Heart left ventricle (tissue), 16 donors: ENCODE measurements at regions of chr13 and their contacts with region 1.

Region 1: DNA sequence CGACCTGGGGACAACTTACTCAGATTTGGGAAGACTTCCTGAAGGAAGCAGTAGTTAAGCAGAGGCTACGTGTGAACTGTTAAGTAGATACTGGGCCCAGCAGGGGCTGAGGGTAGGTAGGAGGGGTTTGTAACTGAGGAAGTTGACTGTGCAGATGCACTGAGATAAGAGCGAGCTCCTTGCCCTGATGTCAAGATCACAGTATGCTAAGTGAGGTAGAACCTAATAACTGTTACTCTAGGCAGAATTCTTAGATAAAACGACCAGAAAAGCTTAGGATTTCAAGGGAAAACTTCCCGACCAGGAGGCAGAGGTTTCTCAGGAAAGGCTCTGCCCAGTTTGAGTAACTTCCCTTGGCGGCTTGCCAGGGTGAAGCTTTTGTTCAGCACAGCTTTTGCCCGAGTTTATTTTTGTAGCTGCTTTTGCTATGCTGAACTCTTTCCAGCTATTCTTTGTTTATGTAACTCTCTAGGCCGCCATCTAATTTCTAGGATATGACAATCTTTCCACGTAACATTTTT is 632.1 kb downstream of the DIAPH3 start:
- DNase-seq: peak; percentile 87 to 93 (median 90)
- ATAC-seq: peak; percentile 78 to 94 (median 90)
- H3K4me3 ChIP-seq: no peak overlapping the region
- H3K27ac ChIP-seq: peak overlapping the region in 11 of 12 donors; percentile 19 to 72 (median 48)
- H3K4me1 ChIP-seq: peaks cover 3 to 41% (median 23%) of the 10 kb centered on the region in 12 donors
- H3K27me3 ChIP-seq: no peaks in the 10 kb centered on the region
- CTCF ChIP-seq: no peak
- POLR2A ChIP-seq: no peak

Region 2: GRCh38 chr13:59345316-59345715 is 186.3 kb before region 1 on chr13:
- intact Hi-C with region 1: loop called in 1 of 10 experiments (anchors 5 kb)
- DNase-seq: peak; percentile 69 to 93 (median 85)
- ATAC-seq: peak; percentile 94 to 97 (median 96)
- H3K4me3 ChIP-seq: no peak overlapping the region
- H3K27ac ChIP-seq: peak overlapping the region in 11 of 12 donors; percentile 40 to 80 (median 65)
- H3K4me1 ChIP-seq: peaks cover 0 to 63% (median 21%) of the 10 kb centered on the region in 12 donors
- H3K27me3 ChIP-seq: no peaks in the 10 kb centered on the region
- CTCF ChIP-seq: no peak
- POLR2A ChIP-seq: no peak

Region 3: GRCh38 chr13:59472134-59472533 is 59.5 kb before region 1 on chr13:
- intact Hi-C with region 1: no loop called
- DNase-seq: no peak
- ATAC-seq: no peak
- H3K4me3 ChIP-seq: no peak overlapping the region
- H3K27ac ChIP-seq: no peak overlapping the region
- H3K4me1 ChIP-seq: peaks cover 0 to 16% (median 12%) of the 10 kb centered on the region in 12 donors
- H3K27me3 ChIP-seq: no peaks in the 10 kb centered on the region
- CTCF ChIP-seq: no peak
- POLR2A ChIP-seq: no peak

Region 4: GRCh38 chr13:59483501-59484145 is 48.0 kb before region 1 on chr13:
- intact Hi-C with region 1: loop called in 2 of 10 experiments (anchors 5 kb)
- DNase-seq: peak in 3 of 5 donors; percentile 24 to 48 (median 34)
- ATAC-seq: peak; percentile 68 to 86 (median 79)
- H3K4me3 ChIP-seq: no peak overlapping the region
- H3K27ac ChIP-seq: peak overlapping the region in 9 of 12 donors; percentile 32 to 67 (median 47)
- H3K4me1 ChIP-seq: peaks cover 0 to 47% (median 15%) of the 10 kb centered on the region in 12 donors
- H3K27me3 ChIP-seq: no peaks in the 10 kb centered on the region
- CTCF ChIP-seq: no peak
- POLR2A ChIP-seq: no peak

Region 5: GRCh38 chr13:59633290-59633689 is 101.7 kb after region 1 on chr13:
- intact Hi-C with region 1: loop called in 1 of 10 experiments (anchors 2 kb)
- DNase-seq: peak in 3 of 5 donors; percentile 31 to 46 (median 33)
- ATAC-seq: peak; percentile 55 to 92 (median 70)
- H3K4me3 ChIP-seq: no peak overlapping the region
- H3K27ac ChIP-seq: peak overlapping the region in 6 of 12 donors; percentile 30 to 66 (median 50)
- H3K4me1 ChIP-seq: peaks cover 0 to 22% (median 7%) of the 10 kb centered on the region in 12 donors
- H3K27me3 ChIP-seq: no peaks in the 10 kb centered on the region
- CTCF ChIP-seq: no peak
- POLR2A ChIP-seq: no peak

Region 6: GRCh38 chr13:59666504-59666903 is 134.9 kb after region 1 on chr13:
- intact Hi-C with region 1: loop called in 2 of 10 experiments (anchors 5 to 10 kb)
- DNase-seq: no peak
- ATAC-seq: peak in 3 of 4 donors; percentile 53 to 88 (median 61)
- H3K4me3 ChIP-seq: no peak overlapping the region
- H3K27ac ChIP-seq: peak overlapping the region in 6 of 12 donors; percentile 12 to 59 (median 46)
- H3K4me1 ChIP-seq: peaks cover 0 to 26% (median 8%) of the 10 kb centered on the region in 12 donors
- H3K27me3 ChIP-seq: no peaks in the 10 kb centered on the region
- CTCF ChIP-seq: no peak
- POLR2A ChIP-seq: no peak